SK-N-SH (cell line): ENCODE measurements at regions of chrX and their contacts with region 1.

Region 1: DNA sequence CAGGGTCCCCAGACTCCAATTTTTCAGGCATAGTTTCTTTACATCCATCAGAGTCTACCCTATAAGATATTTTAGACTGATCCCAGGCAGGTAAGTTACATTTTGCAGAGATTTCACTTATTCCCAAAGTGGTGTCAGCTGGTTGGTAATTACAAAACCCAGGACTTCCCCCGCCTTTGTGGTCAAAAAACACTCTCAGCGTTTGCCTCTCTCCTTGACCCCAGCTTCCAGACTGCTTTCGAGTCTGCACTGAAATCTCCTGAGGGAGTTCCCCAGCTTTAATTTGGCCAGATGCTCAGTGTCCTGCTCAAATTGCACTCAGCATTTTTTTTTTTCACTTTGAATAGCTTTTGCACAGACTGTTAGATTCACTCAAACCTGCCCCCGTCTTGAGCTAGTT is 11.2 kb upstream of the AMOT start:
- DNase-seq: no peak
- H3K4me3 ChIP-seq: no peak overlapping the region
- H3K27ac ChIP-seq: no peak overlapping the region
- H3K4me1 ChIP-seq: peaks cover 0 to 5% of the 10 kb centered on the region in 2 experiments; a peak in 1 of 4 replicates
- H3K27me3 ChIP-seq: peaks cover 16% of the 10 kb centered on the region; the same call in 1 of the 2 replicates
- CTCF ChIP-seq: no peak
- EP300 ChIP-seq: no peak
- RAD21 ChIP-seq: no peak

Region 2: GRCh38 chrX:112841114-112841819 is 10.5 kb before region 1 on chrX:
- CTCF ChIA-PET with region 1: interaction called, 10 read pairs
- POLR2A ChIA-PET with region 1: no interaction called
- DNase-seq: peak; percentile 86
- H3K4me3 ChIP-seq: peak overlapping the region; percentile 59 to 66
- H3K27ac ChIP-seq: peak overlapping the region; percentile 57 to 78
- H3K4me1 ChIP-seq: no peaks in the 10 kb centered on the region
- H3K27me3 ChIP-seq: no peaks in the 10 kb centered on the region
- CTCF ChIP-seq: no peak
- EP300 ChIP-seq: no peak
- RAD21 ChIP-seq: no peak

Region 3: DNA sequence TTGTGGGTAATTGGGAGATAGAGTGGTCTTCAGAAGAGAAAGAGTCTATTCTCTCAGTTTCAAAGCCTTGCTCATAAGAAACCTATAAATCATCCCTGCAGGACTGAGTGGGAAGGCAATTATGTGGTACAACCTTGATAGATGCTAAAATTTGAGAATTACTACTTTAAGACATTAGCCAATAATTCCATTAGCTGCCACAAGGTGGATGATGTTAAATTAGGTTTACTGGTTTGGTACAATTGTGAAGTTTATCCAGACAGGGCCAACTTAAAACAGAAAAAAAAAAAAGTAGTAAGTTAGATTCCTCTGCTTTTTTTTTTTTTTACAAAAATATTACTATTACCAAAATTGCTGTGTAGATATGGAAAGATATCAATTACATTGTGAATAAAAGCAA is 62.0 kb after region 1 on chrX:
- CTCF ChIA-PET with region 1: no interaction called
- POLR2A ChIA-PET with region 1: no interaction called
- DNase-seq: no peak
- H3K4me3 ChIP-seq: no peak overlapping the region
- H3K27ac ChIP-seq: no peak overlapping the region
- H3K4me1 ChIP-seq: no peaks in the 10 kb centered on the region
- H3K27me3 ChIP-seq: no peaks in the 10 kb centered on the region
- CTCF ChIP-seq: peak; percentile 39
- EP300 ChIP-seq: no peak
- RAD21 ChIP-seq: no peak

Region 4: DNA sequence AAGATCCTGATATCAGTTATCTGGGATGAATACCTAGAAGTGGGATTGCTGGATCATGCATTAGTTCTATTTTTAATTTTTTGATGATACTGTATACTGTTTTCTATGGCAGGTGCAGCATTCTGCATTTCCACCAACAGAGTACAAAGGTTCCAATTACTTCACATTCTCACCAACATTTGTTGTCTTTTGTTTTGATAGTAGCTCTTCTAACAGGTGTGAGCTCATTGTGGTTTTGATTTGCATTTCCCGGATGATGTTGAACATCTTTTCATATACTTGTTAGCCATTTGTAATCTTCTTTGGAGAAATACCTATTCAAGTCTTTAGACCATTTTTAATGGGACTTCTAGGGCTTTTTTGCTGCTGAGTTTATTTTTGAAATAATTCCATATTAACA is 128.1 kb after region 1 on chrX:
- CTCF ChIA-PET with region 1: no interaction called
- POLR2A ChIA-PET with region 1: no interaction called
- DNase-seq: no peak
- H3K4me3 ChIP-seq: no peak overlapping the region
- H3K27ac ChIP-seq: no peak overlapping the region
- H3K4me1 ChIP-seq: no peaks in the 10 kb centered on the region
- H3K27me3 ChIP-seq: no peaks in the 10 kb centered on the region
- CTCF ChIP-seq: no peak
- EP300 ChIP-seq: no peak
- RAD21 ChIP-seq: no peak